Ovary (tissue), 10 donors: ENCODE measurements at regions of chrX and their contacts with region 1.

Region 1: GRCh38 chrX:141857479-141857878 is 19.4 kb downstream of the MAGEC3 start:
- DNase-seq: no peak
- H3K4me3 ChIP-seq: no peak overlapping the region
- H3K27ac ChIP-seq: no peak overlapping the region
- H3K4me1 ChIP-seq: no peaks in the 10 kb centered on the region
- H3K27me3 ChIP-seq: no peaks in the 10 kb centered on the region
- CTCF ChIP-seq: no peak
- EP300 ChIP-seq: no peak
- POLR2A ChIP-seq: no peak

Region 2: GRCh38 chrX:141879616-141880015 is 22.1 kb after region 1 on chrX:
- intact Hi-C with region 1: loop called in 1 of 4 experiments (anchors 1 kb)
- DNase-seq: no peak
- H3K4me3 ChIP-seq: no peak overlapping the region
- H3K27ac ChIP-seq: no peak overlapping the region
- H3K4me1 ChIP-seq: no peaks in the 10 kb centered on the region
- H3K27me3 ChIP-seq: no peaks in the 10 kb centered on the region
- CTCF ChIP-seq: no peak
- EP300 ChIP-seq: no peak
- POLR2A ChIP-seq: no peak

Region 3: DNA sequence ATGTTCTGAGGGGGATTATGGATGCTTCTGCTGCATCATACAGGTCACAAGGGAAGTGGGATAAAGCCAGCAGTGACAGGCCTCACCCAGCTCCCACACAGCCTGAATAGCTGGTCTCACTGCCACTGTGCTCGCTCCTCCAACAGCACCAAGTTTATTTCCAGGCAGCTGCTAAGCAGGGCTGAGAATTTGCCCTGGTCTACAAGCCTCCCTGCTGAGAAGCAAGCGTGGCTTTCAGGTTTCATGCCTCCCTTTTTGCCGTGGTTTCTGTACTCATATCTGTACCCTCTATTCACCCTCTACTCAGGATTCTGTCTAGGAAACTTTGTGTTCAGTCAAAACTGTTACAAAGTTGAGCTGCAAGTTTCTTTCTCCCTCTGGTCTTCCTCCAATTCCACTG is 124.8 kb after region 1 on chrX:
- intact Hi-C with region 1: no loop called
- DNase-seq: no peak
- H3K4me3 ChIP-seq: no peak overlapping the region
- H3K27ac ChIP-seq: no peak overlapping the region
- H3K4me1 ChIP-seq: no peaks in the 10 kb centered on the region
- H3K27me3 ChIP-seq: no peaks in the 10 kb centered on the region
- CTCF ChIP-seq: no peak
- EP300 ChIP-seq: no peak
- POLR2A ChIP-seq: no peak

Region 4: GRCh38 chrX:142036116-142036515 is 178.6 kb after region 1 on chrX:
- intact Hi-C with region 1: no loop called
- DNase-seq: no peak
- H3K4me3 ChIP-seq: no peak overlapping the region
- H3K27ac ChIP-seq: no peak overlapping the region
- H3K4me1 ChIP-seq: no peaks in the 10 kb centered on the region
- H3K27me3 ChIP-seq: no peaks in the 10 kb centered on the region
- CTCF ChIP-seq: no peak
- EP300 ChIP-seq: no peak
- POLR2A ChIP-seq: no peak